PC-9 (cell line): ENCODE measurements at regions of chr12 and their contacts with region 1.

Region 1: DNA sequence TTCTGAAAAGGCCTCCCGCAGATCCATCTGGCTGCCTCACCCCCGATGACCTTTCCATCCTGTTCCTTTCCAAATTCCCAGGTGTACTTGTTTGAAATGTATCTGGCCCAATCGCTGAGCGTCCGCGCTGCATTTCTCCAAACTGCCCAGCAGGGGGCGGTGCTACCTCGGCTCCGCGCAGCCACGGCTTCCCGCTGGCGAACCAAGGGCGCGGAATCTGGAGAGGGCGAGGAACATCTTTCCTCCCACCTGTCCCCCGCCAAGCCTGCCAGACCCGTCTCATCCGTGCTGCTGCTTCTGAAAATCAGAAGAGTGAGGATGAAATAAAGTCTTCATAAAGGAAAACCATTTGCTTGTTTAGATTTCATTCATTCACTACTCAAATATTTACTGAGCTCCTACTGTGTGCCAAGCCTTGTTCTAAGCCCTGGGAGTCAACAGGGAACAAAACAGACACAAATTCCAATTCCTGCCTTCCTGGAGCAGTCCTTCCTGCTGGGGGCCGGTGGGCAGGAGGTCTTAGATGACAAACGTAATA is 16.8 kb upstream of the MYL2 start:
- DNase-seq: peak; percentile 36 to 49
- H3K4me3 ChIP-seq: no peak overlapping the region; the same call in 1 of the 2 replicates
- H3K27ac ChIP-seq: no peak overlapping the region
- H3K4me1 ChIP-seq: peaks cover 25% of the 10 kb centered on the region
- H3K27me3 ChIP-seq: no peaks in the 10 kb centered on the region
- CTCF ChIP-seq: peak; percentile 97

Region 2: DNA sequence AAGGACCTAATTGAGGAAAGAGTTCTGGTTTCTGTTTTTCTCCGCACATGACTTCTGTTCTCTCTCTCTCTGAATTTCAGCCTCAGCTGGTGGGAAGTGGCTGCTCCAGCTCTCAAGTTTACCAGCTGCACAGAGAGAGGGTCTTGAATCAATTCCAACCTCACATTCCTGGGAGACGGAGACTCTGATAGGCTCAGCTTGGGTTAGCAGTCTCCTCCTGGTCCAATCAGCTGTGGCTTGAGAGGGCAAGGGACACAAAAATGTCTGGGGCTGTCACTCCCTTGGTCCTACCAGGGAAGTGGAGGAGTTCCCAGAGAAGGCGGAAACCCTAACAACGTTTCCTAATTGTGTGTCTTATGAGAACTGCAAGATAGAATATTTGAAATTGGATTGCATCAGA is 83.3 kb before region 1 on chr12:
- CTCF ChIA-PET with region 1: no interaction called
- POLR2A ChIA-PET with region 1: no interaction called
- intact Hi-C with region 1: no loop called
- DNase-seq: no peak
- H3K4me3 ChIP-seq: no peak overlapping the region
- H3K27ac ChIP-seq: no peak overlapping the region
- H3K4me1 ChIP-seq: no peaks in the 10 kb centered on the region
- H3K27me3 ChIP-seq: peaks cover 38% of the 10 kb centered on the region
- CTCF ChIP-seq: no peak

Region 3: DNA sequence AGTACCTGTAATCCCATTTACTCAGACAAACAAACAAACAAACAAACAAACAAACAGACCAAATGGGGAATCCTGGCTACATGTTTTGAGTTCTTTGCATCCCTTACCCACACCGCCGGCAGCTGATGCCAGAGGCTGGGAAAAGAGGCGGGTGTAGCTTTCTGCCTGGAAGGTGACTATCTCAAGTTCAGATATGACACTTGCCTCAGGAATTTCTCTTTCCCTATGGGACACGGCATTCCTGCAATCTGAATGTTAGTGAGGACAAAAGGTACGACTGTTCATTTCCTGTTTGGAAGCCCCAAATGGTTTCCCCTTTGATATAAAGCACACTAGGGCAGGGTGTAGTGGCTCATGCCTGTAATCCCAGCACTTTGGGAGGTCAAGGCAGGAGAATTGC is 19.7 kb before region 1 on chr12:
- CTCF ChIA-PET with region 1: no interaction called
- POLR2A ChIA-PET with region 1: no interaction called
- intact Hi-C with region 1: loop called (anchors 2 kb)
- DNase-seq: peak; percentile 57 to 87
- H3K4me3 ChIP-seq: no peak overlapping the region
- H3K27ac ChIP-seq: peak overlapping the region; percentile 85
- H3K4me1 ChIP-seq: peaks cover 29% of the 10 kb centered on the region
- H3K27me3 ChIP-seq: no peaks in the 10 kb centered on the region
- CTCF ChIP-seq: no peak

Region 4: GRCh38 chr12:111298582-111299436 is 361.6 kb after region 1 on chr12:
- CTCF ChIA-PET with region 1: interaction called, 3 read pairs
- POLR2A ChIA-PET with region 1: no interaction called
- intact Hi-C with region 1: loop called (anchors 1 kb)
- DNase-seq: peak in 1 of 2 experiments; percentile 51
- H3K4me3 ChIP-seq: no peak overlapping the region
- H3K27ac ChIP-seq: no peak overlapping the region
- H3K4me1 ChIP-seq: no peaks in the 10 kb centered on the region
- H3K27me3 ChIP-seq: no peaks in the 10 kb centered on the region
- CTCF ChIP-seq: peak; percentile 82

Region 5: DNA sequence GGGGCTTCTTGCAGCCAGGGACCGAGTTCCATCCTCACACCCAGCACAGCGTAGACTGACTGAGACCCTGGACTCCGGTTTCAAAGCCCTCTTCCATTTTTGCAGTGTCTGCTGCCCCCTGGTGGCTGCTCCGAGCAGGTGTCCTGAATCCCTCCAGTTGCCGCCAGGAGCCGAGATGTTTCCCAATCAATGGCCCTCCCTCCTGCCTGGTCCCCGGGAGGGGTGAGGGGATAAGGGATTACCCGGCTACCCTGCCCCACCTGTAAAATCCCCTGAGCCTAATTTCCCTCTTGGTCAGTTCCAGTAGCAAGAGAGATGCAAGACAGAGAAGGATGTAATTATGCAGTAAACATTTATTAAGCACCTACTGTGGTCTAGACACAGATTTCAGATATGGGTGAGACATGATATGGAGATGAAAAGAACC is 376.7 kb after region 1 on chr12:
- CTCF ChIA-PET with region 1: no interaction called
- POLR2A ChIA-PET with region 1: no interaction called
- intact Hi-C with region 1: loop called (anchors 5 kb)
- DNase-seq: peak; percentile 49 to 68
- H3K4me3 ChIP-seq: no peak overlapping the region
- H3K27ac ChIP-seq: no peak overlapping the region
- H3K4me1 ChIP-seq: peaks cover 36% of the 10 kb centered on the region
- H3K27me3 ChIP-seq: no peaks in the 10 kb centered on the region
- CTCF ChIP-seq: peak; percentile 96